H1 (cell line): ENCODE measurements at regions of chr9 and their contacts with region 1.

Region 1: GRCh38 chr9:131366761-131367401 is 27.0 kb upstream of the PRRC2B start:
- DNase-seq: peak in 1 of 2 experiments; percentile 63
- H3K4me3 ChIP-seq: no peak overlapping the region
- H3K27ac ChIP-seq: no peak overlapping the region
- H3K4me1 ChIP-seq: peaks cover 0 to 3% (median 0%) of the 10 kb centered on the region in 4 experiments; a peak in 1 of 7 replicates
- H3K27me3 ChIP-seq: no peaks in the 10 kb centered on the region
- CTCF ChIP-seq: peak; percentile 57 to 68 (median 58)
- EP300 ChIP-seq: no peak
- POLR2A ChIP-seq: no peak
- RAD21 ChIP-seq: peak; percentile 67 to 79

Region 2: DNA sequence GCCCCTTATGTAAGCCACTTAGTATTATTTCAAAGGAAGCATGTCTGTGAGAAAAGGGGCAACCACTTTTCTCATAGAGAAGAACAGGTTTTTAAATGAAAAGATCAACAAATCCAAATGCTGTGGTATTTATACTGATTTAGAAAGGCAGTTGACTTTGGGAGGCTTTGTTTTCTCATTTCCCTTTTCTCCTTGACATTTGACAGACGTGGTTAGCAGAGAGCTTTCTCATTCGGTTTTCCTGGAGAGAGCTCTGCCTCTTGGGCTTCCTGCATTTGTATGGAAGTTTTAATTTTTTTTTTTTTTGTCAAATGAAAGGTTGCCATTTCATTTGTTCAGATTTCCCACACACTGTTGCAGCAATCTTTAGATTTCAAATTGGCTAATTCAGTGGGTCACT is 610.8 kb before region 1 on chr9:
- CTCF ChIA-PET with region 1: no interaction called
- POLR2A ChIA-PET with region 1: no interaction called
- DNase-seq: no peak
- H3K4me3 ChIP-seq: no peak overlapping the region
- H3K27ac ChIP-seq: no peak overlapping the region
- H3K4me1 ChIP-seq: peaks cover 2 to 14% (median 6%) of the 10 kb centered on the region in 4 experiments; a peak in 5 of 7 replicates
- H3K27me3 ChIP-seq: no peaks in the 10 kb centered on the region
- CTCF ChIP-seq: no peak
- EP300 ChIP-seq: no peak
- POLR2A ChIP-seq: no peak
- RAD21 ChIP-seq: no peak

Region 3: DNA sequence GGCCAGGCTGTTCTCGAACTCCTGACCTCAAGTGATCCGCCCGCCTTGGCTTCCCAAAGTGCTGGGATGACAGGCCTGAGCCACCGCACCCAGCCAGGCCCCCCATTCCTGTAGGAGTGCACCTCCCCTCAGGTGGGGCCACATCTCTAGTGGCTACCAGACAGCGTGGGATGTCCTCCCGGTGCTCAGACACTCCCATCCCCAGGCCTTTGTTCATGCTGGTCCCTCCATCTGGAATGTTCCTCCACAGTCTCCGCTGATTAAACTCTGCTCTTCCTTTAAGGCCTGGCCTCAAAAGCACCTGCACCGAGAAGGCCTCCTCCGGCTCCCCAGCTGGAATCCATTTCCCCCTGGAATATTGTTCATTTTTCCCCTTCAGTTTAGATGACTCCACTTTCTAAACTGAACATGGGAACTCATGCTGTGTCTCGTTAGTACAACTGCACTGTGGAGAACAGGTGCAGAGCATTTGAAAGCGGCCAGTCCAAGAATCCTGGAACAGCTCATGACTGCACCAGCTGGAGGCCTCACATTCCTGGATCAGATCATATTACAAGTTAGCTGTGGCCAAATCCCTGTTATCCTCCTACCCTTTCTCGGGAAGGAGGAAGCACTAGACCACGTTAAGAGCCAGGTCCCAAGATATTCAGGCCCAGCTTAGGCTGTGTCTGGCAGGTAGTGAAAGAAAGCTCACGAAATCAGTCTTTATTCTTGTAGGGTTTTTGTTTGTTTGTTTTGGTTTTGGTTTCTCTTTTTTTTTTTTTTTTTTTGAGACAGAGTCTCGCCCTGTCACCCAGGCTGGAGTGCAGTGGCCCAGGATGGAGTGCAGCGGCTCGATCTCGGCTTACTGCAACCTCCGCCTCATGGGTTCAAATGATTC is 16.2 kb after region 1 on chr9:
- CTCF ChIA-PET with region 1: interaction called, 9 read pairs
- POLR2A ChIA-PET with region 1: interaction called, 30 read pairs
- DNase-seq: peak in 1 of 2 experiments; percentile 52
- H3K4me3 ChIP-seq: no peak overlapping the region
- H3K27ac ChIP-seq: 0 out of 2 replicates have a peak overlapping the region, but pooled peaks have one; percentile 31
- H3K4me1 ChIP-seq: peaks cover 4 to 12% (median 6%) of the 10 kb centered on the region in 4 experiments; a peak in 6 of 7 replicates
- H3K27me3 ChIP-seq: no peaks in the 10 kb centered on the region
- CTCF ChIP-seq: no peak
- EP300 ChIP-seq: no peak
- POLR2A ChIP-seq: no peak
- RAD21 ChIP-seq: 0 out of 4 replicates have a peak, but pooled peaks of 1 of the 2 experiments have one; percentile 16

Region 4: DNA sequence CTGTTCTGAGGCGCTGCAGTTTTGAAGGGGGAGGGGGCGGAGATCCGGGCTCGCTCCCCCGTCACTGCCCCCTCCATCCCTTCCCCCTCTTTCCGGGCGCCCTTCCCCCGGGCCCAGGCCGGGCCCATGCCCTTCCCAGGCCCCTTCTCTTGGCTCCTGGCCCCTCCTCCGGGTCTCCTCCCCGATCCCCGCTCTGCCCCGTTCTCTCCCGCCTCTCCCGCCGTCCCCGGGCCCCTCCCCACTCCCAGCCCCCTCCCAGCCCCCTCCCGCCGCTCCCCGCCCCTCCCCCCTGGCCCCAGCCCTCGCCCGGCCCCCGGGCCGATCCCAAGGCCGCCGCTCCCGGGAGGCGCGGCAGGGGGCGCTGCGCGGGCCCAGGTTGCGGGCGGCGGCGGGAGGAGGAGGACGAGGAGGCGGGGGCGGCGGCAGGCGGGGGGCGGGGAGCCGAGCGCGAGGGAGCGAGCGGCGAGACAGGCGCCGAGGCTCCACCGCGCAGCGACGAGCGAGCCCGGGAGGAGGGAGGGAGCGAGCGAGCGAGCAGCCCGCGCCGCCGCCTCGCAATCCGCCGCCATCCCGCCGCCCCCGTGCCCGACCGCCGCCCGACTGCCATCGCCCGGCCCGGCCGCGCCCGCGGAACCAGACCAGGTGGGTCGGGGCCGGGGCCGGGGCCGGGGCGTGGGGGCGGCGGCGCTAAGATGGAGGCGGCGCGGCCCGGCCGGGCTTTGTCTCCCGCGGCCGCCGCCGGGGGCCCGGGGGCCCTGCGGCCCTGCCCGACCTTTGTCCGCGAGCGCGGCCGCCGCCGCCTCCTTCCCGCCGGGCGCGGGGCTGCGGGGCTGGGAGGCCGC is 27.0 kb after region 1 on chr9 and contains the start of gene PRRC2B:
- CTCF ChIA-PET with region 1: interaction called, 3 read pairs
- POLR2A ChIA-PET with region 1: interaction called, 35 read pairs
- DNase-seq: peak; percentile 75 to 87
- H3K4me3 ChIP-seq: peak within 1 kb of the TSS; percentile 70 to 88 (median 83)
- H3K27ac ChIP-seq: peak within 1 kb of the TSS; percentile 85
- H3K4me1 ChIP-seq: peaks cover 8 to 28% (median 14%) of the 10 kb centered on the region in 4 experiments
- H3K27me3 ChIP-seq: no peaks in the 10 kb centered on the region
- CTCF ChIP-seq: peak in 2 of 3 experiments; percentile 42 to 63; a peak in 3 of 4 replicates
- EP300 ChIP-seq: no peak; a peak in 1 of 3 replicates
- POLR2A ChIP-seq: peak; percentile 57 to 64; a peak in 2 of 3 replicates
- RAD21 ChIP-seq: peak in 1 of 2 experiments; percentile 57; a peak in 2 of 4 replicates
- total RNA-seq, gene PRRC2B: 249 and 255 TPM in 2 replicates

Region 5: GRCh38 chr9:131407717-131408195 is 40.9 kb after region 1 on chr9:
- CTCF ChIA-PET with region 1: interaction called, 16 read pairs
- POLR2A ChIA-PET with region 1: interaction called, 27 read pairs
- DNase-seq: peak in 1 of 2 experiments; percentile 65
- H3K4me3 ChIP-seq: peak overlapping the region in 3 of 4 experiments; percentile 6 to 44 (median 11); a peak in 4 of 8 replicates
- H3K27ac ChIP-seq: peak overlapping the region; percentile 59; the same call in 1 of the 2 replicates
- H3K4me1 ChIP-seq: peaks cover 40 to 61% (median 47%) of the 10 kb centered on the region in 4 experiments
- H3K27me3 ChIP-seq: no peaks in the 10 kb centered on the region
- CTCF ChIP-seq: peak; percentile 59 to 64 (median 63)
- EP300 ChIP-seq: no peak
- POLR2A ChIP-seq: peak in 1 of 2 experiments; percentile 33; a peak in 1 of 3 replicates
- RAD21 ChIP-seq: peak; percentile 58 to 72

Region 6: GRCh38 chr9:131432597-131433306 is 65.9 kb after region 1 on chr9:
- CTCF ChIA-PET with region 1: interaction called, 22 read pairs
- POLR2A ChIA-PET with region 1: interaction called, 9 read pairs
- DNase-seq: no peak
- H3K4me3 ChIP-seq: no peak overlapping the region
- H3K27ac ChIP-seq: no peak overlapping the region
- H3K4me1 ChIP-seq: peaks cover 21 to 39% (median 22%) of the 10 kb centered on the region in 4 experiments
- H3K27me3 ChIP-seq: no peaks in the 10 kb centered on the region
- CTCF ChIP-seq: no peak
- EP300 ChIP-seq: no peak
- POLR2A ChIP-seq: 0 out of 3 replicates have a peak, but pooled peaks of 1 of the 2 experiments have one; percentile 44
- RAD21 ChIP-seq: no peak

Region 7: DNA sequence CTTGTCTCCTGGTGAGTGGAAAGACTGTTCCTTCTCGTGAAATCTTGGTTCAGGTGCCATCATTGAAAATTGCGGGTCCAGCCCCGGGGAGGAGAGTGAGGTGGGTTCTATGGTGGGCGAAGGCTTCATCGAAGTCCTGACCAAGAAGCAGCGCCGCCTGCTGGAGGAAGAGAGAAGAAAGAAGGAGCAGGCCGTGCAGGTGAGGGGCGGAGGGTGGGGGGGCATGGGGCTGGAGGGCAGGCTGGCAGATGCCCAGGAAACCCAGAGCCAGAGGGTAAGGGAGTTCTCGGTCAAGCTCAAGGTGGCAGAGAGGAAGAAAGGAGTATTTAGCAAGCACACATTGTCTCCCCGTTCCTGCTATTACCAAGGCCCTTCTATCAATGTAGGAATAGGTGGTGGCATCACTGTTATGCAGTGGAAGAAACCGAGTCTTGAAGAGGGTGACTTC is 111.6 kb after region 1 on chr9:
- CTCF ChIA-PET with region 1: interaction called, 18 read pairs
- POLR2A ChIA-PET with region 1: interaction called, 3 read pairs
- DNase-seq: peak; percentile 33 to 85
- H3K4me3 ChIP-seq: no peak overlapping the region
- H3K27ac ChIP-seq: no peak overlapping the region
- H3K4me1 ChIP-seq: no peaks in the 10 kb centered on the region
- H3K27me3 ChIP-seq: no peaks in the 10 kb centered on the region
- CTCF ChIP-seq: peak; percentile 55 to 85 (median 68)
- EP300 ChIP-seq: no peak
- POLR2A ChIP-seq: no peak
- RAD21 ChIP-seq: peak; percentile 43 to 49